ENCODE measurements at regions of chr2 and their contacts with region 1.

Region 1: DNA sequence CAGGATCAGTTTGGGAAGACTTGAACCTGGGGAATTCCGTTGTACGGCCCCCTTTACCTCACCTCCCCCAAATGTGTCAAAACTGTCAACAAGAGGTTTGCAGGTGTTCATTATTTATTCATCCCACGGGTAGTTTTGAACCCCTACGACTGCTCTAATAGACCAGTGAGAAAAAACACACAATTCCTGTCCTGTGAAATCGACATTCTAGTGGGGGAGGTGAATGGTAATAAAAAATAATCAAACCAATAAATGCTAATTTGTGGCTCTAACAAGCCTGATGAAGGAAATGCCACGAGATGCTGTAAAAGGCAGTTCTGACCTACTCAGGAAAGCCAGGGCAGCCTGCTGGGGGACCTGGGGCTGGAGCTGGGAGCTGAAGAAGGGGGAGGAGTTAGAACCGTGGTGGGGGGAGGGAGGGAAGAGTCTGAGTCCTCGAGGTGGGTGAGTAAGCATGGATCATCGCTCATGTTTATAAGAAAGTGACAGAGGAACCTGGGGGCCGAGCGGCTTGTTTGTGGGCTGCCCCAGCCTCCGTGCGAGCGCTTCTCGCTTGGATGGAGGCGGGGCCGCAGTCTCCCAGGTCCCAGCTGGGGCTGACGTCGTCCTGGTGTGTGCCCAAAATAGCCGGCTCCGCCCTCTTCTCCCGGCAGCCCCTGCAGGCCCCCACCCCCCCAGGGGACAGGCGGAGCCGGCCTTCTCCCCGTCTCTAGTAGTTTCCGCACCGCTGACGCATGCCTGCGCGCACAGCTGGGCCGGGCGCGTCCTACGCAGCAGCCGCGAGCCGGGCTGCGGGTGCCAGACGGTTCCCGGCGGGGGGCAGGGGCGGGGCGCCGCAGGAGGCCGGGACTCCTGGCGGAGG is at the start of gene DNAJB2:
- DNase-seq: peak; percentile 100
- H3K4me3 ChIP-seq: peak within 1 kb of the TSS; percentile 39 to 78 (median 58)
- H3K27ac ChIP-seq: peak within 1 kb of the TSS; percentile 94 to 99 (median 98)
- H3K4me1 ChIP-seq: peaks cover 26 to 69% (median 42%) of the 10 kb centered on the region in 6 donors
- H3K27me3 ChIP-seq: no peaks in the 10 kb centered on the region
- CTCF ChIP-seq: no peak
- POLR2A ChIP-seq: peak; percentile 42 to 97 (median 88)
- total RNA-seq, gene DNAJB2: 35.0 to 64.4 (median 54.0) TPM

Region 2: GRCh38 chr2:219229305-219230058 is 49.4 kb before region 1 on chr2 and contains the starts of genes ANKZF1 and ATG9A:
- intact Hi-C with region 1: loop called (anchors 5 kb)
- DNase-seq: peak; percentile 100
- H3K4me3 ChIP-seq: peak within 1 kb of the TSS; percentile 56 to 79 (median 73)
- H3K27ac ChIP-seq: peak within 1 kb of the TSS; percentile 88 to 99 (median 97)
- H3K4me1 ChIP-seq: peaks cover 18 to 75% (median 50%) of the 10 kb centered on the region in 6 donors
- H3K27me3 ChIP-seq: no peaks in the 10 kb centered on the region
- CTCF ChIP-seq: peak in 5 of 11 experiments; percentile 15 to 31 (median 27)
- POLR2A ChIP-seq: peak in 2 of 3 donors; percentile 69 to 84
- total RNA-seq, gene ANKZF1: 68.3 to 141 (median 74.0) TPM
- total RNA-seq, gene ATG9A: 34.7 to 68.2 (median 47.2) TPM